Common myeloid progenitor, CD34-positive (primary cell): ENCODE measurements at regions of chr2 and their contacts with region 1.

Region 1: DNA sequence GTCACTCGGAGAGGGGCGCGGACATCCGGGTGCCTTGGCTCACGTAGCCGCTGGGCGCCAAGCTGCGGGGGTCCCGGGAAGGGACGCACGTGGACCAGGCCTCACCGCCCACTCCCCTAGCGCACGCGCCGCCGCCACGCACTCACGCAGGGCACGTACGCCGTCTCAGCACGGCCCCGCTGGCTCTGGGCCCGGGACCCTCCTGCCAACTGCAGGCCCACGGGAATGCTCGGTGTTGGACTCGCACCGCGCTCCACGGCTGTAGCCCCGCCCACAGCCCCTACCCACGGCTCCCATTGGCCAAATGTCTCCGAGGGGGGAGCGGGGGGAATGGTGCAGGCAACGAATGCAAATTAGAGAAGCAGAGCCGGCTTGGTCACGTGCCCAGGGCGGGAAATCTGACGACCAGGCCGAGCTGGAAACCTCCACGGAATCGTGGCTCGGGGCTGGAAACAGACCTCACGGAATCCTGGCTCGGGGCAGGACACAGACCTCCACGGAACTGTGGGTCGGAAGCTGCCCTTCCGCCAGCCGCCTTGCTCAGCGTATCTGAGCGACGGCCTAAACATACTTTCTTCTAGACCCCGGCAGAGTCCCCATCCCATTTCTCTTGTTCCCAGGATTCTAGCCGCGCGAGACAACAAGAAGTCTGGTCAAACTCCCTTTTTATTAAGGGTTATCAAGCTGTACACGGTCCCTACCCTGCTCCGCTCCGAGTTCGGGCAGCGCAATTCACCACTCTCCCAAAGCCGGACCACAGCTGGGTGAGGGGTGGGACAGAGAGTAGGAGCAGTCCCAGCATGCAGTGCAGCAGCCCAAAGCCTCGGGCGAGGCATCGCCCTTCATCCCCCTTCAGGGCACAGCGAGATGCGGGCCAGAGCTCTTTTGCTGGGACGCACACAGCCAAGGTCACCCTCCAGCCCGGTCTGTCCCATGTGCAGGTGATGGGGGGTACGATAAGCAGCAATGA is at the start of gene ABCB6:
- DNase-seq: peak; percentile 84 to 92 (median 92)
- H3K4me3 ChIP-seq: peak within 1 kb of the TSS in 6 of 7 experiments; percentile 18 to 77 (median 62)
- H3K27ac ChIP-seq: peak within 1 kb of the TSS in 1 of 2 experiments; percentile 25
- H3K4me1 ChIP-seq: peaks cover 0 to 37% (median 27%) of the 10 kb centered on the region in 4 experiments
- H3K27me3 ChIP-seq: no peaks in the 10 kb centered on the region

Region 2: DNA sequence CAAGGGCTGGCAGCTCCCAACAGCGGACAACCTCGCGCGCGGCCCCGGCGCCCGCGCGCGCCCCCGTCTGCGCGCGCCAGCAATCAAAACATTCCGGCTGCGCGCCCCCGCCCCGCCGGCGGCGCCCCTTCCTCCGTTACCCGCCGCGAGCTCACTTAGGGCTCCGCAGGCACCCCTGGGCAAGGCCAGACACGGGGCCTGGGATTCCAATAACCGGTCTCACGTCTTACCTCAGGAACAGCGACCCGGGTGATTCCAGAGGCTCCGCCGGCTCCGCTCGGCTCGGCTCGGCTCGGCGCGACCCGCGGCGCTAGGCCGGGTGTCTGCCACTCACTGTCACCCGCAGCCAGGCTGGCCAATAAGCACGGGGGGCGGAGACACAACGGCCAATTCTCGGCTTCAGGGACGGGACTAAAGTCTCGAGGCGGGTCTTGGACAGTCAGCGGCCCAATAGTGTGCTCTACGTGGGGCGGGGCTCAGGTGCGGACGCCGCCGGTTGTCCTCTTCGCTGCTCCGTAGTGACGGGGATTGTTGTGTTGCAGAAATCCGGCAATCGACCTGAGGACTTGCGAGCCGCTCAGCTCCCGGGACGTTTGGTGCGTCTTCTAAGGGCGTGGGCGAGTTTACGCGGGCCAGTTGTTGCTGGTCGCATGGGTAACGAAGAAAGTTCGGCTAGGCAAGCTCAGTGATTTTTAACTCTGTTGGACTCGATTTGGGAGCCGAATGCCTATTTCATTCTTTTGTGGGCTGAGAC is 10.5 kb after region 1 on chr2 and contains the starts of genes ANKZF1 and ATG9A:
- CTCF ChIA-PET with region 1: interaction called, 41 read pairs
- POLR2A ChIA-PET with region 1: interaction called, 4 read pairs
- DNase-seq: peak; percentile 97 to 99 (median 99)
- H3K4me3 ChIP-seq: peak within 1 kb of the TSS; percentile 60 to 98 (median 91)
- H3K27ac ChIP-seq: peak within 1 kb of the TSS; percentile 85 to 90
- H3K4me1 ChIP-seq: peaks cover 10 to 41% (median 36%) of the 10 kb centered on the region in 4 experiments
- H3K27me3 ChIP-seq: no peaks in the 10 kb centered on the region